ENCODE measurements at regions of chr6 and their contacts with region 1.

Region 1: DNA sequence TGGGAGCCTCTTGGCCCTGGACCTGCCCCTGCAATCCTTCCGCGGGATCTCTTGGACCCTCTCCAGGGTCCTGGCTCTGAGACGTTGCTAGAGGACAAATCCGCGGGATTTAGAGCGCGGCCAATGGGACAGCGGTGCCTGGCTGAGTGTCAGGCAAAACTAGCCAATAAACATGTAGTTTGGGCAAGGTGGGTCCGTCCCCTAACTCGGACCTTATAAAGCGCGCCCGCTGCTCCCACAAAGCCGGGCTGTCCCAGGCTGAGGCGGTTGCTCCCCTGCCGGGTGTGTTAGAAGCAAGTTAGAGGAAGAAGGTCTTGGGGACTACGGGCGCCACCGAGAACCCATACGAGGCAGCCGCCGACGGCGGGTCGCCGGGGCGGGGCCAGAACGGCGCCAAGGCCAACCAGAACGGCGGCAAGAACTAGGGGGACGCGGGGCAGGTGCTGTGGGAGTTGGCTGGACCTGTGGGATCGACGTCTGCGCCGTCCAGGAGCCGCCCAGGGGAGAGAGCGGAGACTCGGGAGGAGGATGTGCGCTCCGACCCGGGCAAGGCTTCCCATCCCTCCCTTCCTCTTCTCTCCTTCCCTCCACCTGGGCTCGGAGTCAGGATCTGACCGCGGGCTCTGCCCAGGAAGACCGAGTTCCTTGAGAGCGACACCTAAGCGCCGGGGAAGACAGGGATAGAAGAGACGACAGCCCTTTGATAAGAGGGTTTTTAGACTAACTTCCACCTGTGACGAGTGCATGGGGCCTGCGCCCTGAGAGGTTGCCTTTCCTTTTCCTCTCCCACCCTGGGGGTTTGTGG is 6.5 kb upstream of the TMEM14A start:
- DNase-seq: peak; percentile 78
- H3K4me3 Mint-ChIP-seq: no peak overlapping the region
- H3K27ac Mint-ChIP-seq: no peak overlapping the region
- H3K4me1 Mint-ChIP-seq: peaks cover 16% of the 10 kb centered on the region
- H3K27me3 Mint-ChIP-seq: no peaks in the 10 kb centered on the region

Region 2: GRCh38 chr6:52537001-52537753 is 127.2 kb before region 1 on chr6:
- intact Hi-C with region 1: loop called (anchors 5 kb)
- DNase-seq: peak; percentile 18
- H3K4me3 Mint-ChIP-seq: no peak overlapping the region
- H3K27ac Mint-ChIP-seq: peak overlapping the region; percentile 19
- H3K4me1 Mint-ChIP-seq: peaks cover 51% of the 10 kb centered on the region
- H3K27me3 Mint-ChIP-seq: no peaks in the 10 kb centered on the region

Region 3: GRCh38 chr6:52598123-52598823 is 66.1 kb before region 1 on chr6:
- intact Hi-C with region 1: loop called (anchors 2 kb)
- DNase-seq: no peak
- H3K4me3 Mint-ChIP-seq: no peak overlapping the region
- H3K27ac Mint-ChIP-seq: no peak overlapping the region
- H3K4me1 Mint-ChIP-seq: peaks cover 27% of the 10 kb centered on the region
- H3K27me3 Mint-ChIP-seq: peaks cover 2% of the 10 kb centered on the region

Region 4: DNA sequence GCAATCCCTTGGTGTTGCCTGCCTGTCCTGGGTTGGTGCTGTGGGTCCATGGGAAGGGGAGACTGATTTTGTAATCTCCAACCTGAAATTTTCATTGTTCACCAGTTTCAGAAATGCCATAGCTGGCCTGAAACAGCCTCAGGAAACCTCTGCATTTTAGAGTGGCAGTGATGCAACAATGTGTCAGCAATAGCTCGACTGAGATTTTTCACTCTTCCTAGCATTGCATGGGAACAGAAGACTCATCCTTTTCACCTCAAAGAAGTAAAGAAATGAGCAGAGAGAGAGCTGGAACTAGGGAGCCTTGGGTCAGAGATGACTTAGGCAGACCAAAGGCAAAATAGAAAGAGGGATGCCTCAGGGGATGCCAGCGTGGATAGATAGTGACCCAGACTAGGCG is 17.2 kb before region 1 on chr6:
- intact Hi-C with region 1: loop called (anchors 1 kb)
- DNase-seq: no peak
- H3K4me3 Mint-ChIP-seq: no peak overlapping the region
- H3K27ac Mint-ChIP-seq: no peak overlapping the region
- H3K4me1 Mint-ChIP-seq: peaks cover 26% of the 10 kb centered on the region
- H3K27me3 Mint-ChIP-seq: peaks cover 8% of the 10 kb centered on the region

Region 5: DNA sequence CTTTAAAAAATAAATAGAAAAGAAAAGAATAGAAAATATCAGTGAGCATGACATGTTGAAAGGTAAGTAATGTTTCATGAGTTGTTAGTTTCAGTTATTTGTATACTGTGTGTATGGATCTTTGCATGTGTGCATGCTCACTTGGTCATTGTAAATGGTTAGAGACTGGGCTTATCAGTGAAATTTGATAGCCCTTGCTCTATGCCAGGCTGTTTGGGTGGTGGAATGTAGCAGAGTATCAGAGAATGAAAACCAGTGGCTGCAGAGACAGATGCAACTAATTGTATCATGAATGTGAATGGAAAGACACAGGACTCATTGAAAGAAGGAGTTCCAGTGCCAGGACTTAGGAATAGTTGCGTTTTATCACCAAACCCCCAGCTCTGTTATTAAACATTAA is 94.7 kb after region 1 on chr6:
- intact Hi-C with region 1: no loop called
- DNase-seq: no peak
- H3K4me3 Mint-ChIP-seq: no peak overlapping the region
- H3K27ac Mint-ChIP-seq: no peak overlapping the region
- H3K4me1 Mint-ChIP-seq: no peaks in the 10 kb centered on the region
- H3K27me3 Mint-ChIP-seq: peaks cover 19% of the 10 kb centered on the region